WTC11 (cell line): ENCODE measurements at regions of chr4 and their contacts with region 1.

Region 1: DNA sequence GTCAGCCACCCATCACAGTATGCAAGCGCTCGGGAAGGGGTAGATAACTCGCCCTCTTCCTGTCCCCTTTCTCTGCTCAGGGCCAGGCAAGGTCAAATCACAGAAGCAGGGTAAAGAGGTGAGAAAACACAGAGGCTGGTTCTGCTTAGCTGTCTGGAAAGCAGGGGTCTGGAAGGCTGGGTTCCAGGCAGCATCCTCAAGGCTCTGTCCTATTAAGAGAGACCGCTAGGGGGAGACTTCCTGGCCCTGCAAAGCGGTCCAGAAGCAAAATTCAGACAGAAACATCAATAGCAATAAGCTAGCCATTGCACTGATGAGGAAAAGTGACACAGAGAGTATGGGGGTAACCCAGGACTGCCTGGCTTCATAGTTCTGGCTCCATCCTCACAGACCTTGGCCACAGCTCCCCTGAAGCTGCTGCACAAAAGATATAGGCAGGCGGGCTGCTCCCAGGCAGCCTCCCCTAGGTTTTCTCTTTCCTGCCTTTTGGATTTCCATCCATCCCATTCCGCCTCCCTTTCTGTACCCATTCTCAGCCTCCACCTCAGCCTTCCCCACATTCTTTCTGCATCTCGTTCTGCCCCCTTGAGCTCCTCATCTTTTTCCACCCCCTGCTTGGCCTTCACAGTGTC is 308.5 kb downstream of the EVC2 start:
- DNase-seq: peak; percentile 42
- ATAC-seq: peak; percentile 85
- H3K4me3 Mint-ChIP-seq: no peak overlapping the region
- H3K27ac Mint-ChIP-seq: no peak overlapping the region
- H3K4me1 Mint-ChIP-seq: no peaks in the 10 kb centered on the region
- H3K27me3 Mint-ChIP-seq: peaks cover 3% of the 10 kb centered on the region
- CTCF ChIP-seq: peak; percentile 81

Region 2: DNA sequence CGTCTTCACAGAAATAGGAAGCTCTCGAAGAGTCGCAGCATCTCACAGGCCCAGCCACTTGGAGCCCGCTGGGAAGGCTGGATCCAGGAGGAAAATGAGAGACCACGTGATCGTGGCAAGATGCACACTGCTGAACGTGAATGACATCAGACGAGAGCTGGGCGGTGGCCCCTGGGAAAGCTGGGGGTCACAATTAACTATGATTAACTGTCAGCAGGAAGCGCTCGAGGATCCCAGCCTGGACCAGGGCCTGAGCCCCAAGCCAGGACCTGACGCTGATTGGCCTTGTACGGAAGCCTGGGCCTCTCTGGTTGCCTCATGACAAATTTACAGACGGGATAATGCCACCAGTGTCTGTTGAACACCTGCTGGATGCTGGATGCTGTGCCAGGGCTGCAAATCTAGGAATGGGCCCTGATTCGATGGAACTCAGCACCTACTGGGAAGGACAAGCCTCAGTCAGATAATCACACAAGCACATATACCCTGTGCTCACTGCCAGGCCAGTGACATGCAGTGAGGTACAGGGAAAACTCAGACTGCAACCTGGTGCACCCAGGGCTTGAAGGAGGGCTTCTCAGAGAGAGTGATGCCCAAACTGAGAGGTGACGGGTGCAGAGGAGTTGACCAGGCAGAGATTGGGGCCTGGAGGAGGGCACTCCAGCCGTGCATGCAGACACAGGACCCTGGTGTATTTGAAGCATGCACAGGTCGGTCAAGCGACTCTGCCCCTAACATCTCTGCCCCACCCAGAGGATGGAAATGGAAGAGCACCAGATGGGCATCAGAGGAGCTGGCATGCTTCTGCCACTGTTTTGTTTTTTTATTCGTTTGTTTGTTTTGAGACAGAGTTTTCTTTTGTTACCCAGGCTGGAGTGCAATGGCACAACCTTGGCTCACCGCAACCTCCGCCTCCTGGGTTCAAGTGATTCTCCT is 12.7 kb before region 1 on chr4:
- CTCF ChIA-PET with region 1: interaction called, 12 read pairs
- POLR2A ChIA-PET with region 1: no interaction called
- DNase-seq: no peak
- ATAC-seq: peak; percentile 72
- H3K4me3 Mint-ChIP-seq: no peak overlapping the region
- H3K27ac Mint-ChIP-seq: no peak overlapping the region
- H3K4me1 Mint-ChIP-seq: no peaks in the 10 kb centered on the region
- H3K27me3 Mint-ChIP-seq: peaks cover 5% of the 10 kb centered on the region; the same call in 1 of the 2 replicates
- CTCF ChIP-seq: no peak

Region 3: GRCh38 chr4:5409972-5410618 is 10.2 kb after region 1 on chr4:
- CTCF ChIA-PET with region 1: interaction called, 21 read pairs
- POLR2A ChIA-PET with region 1: no interaction called
- DNase-seq: no peak
- ATAC-seq: peak; percentile 43; the same call in 1 of the 2 replicates
- H3K4me3 Mint-ChIP-seq: no peak overlapping the region
- H3K27ac Mint-ChIP-seq: no peak overlapping the region
- H3K4me1 Mint-ChIP-seq: no peaks in the 10 kb centered on the region
- H3K27me3 Mint-ChIP-seq: peaks cover 12% of the 10 kb centered on the region; the same call in 1 of the 2 replicates
- CTCF ChIP-seq: no peak

Region 4: GRCh38 chr4:5460116-5460801 is 60.4 kb after region 1 on chr4:
- CTCF ChIA-PET with region 1: interaction called, 32 read pairs
- POLR2A ChIA-PET with region 1: no interaction called
- DNase-seq: peak; percentile 66
- ATAC-seq: peak; percentile 83
- H3K4me3 Mint-ChIP-seq: no peak overlapping the region
- H3K27ac Mint-ChIP-seq: no peak overlapping the region
- H3K4me1 Mint-ChIP-seq: peaks cover 8% of the 10 kb centered on the region
- H3K27me3 Mint-ChIP-seq: no peaks in the 10 kb centered on the region; the same call in 1 of the 2 replicates
- CTCF ChIP-seq: peak; percentile 51; the same call in 1 of the 2 replicates